Activated CD4-positive, alpha-beta T cell treated with anti-CD3 and anti-CD28 coated beads, Interleukin-2, amount 10 ng/mL, durations not matched to agents 24 days and 14 days (primary cell): ENCODE measurements at regions of chr6 and their contacts with region 1.

Region 1: DNA sequence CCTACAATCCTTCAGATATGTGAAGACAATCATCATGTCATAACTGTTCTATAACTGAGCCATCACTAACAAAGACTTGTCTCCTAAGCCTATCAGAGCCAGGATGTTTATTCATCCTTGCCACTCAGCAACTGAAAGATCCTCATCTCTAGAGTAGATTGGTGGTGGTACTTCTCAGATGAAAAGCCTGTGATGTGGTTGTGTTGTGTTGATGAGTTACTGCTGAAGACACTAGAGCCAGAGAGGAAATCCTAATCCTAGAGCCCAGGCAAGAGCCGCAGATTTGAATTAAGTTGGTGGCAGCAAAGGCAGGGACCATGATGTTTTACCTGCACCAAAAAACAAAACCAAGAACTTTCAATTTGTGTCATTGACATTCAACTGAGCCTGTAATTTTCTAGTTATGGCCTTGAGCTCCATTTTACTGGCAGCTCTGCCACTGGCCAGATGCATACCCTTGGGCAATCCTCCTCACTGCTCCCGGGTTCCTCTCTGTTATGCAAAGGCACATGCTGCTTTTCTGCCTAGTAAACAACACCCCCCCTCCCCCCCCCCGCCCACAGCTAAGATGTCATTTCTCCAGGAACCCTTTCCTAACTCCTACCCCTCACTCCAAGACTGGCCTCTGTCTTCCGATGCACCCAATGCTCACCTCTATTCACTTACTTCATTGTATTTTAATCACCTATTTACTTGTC is 50.2 kb upstream of the REV3L start:
- DNase-seq: peak; percentile 79
- H3K4me3 Mint-ChIP-seq: peak overlapping the region; percentile 2
- H3K27ac Mint-ChIP-seq: peak overlapping the region; percentile 46
- H3K4me1 Mint-ChIP-seq: peaks cover 26% of the 10 kb centered on the region
- H3K27me3 Mint-ChIP-seq: no peaks in the 10 kb centered on the region

Region 2: GRCh38 chr6:110938171-110938570 is 595.1 kb before region 1 on chr6:
- intact Hi-C with region 1: no loop called
- DNase-seq: no peak
- H3K4me3 Mint-ChIP-seq: no peak overlapping the region
- H3K27ac Mint-ChIP-seq: no peak overlapping the region
- H3K4me1 Mint-ChIP-seq: peaks cover 4% of the 10 kb centered on the region
- H3K27me3 Mint-ChIP-seq: no peaks in the 10 kb centered on the region

Region 3: DNA sequence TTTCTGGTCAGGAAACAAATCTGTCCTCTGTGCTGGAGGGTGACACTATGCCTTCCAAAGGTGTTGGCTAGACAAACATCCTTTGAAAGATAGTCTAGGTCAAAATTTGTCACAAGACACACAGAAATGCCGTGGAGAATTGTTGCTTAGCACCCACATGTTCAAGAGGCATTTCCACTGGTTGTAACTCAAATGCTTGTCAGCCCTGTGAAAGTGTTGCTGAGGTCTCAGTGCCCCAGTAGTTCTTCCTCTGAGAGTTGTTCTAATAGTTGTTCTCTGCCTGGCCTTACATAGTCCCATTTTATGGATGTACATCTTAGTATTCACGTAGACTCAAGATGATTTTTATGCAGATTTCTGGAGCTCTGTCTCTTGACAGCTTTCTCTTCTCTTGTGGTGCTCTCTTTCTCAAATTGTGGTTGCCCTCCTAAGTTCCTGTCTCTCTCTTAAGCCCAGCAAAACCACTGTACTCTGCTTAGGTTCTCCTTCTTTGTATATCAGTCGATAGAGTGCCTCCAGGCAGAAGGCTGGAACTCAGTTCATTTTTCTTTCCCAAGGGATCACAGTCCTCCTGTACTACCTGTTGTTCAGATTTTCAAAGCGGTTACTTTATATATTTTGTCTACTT is 10.7 kb before region 1 on chr6:
- intact Hi-C with region 1: loop called (anchors 1 kb)
- DNase-seq: peak; percentile 75
- H3K4me3 Mint-ChIP-seq: peak overlapping the region; percentile 42
- H3K27ac Mint-ChIP-seq: peak overlapping the region; percentile 1
- H3K4me1 Mint-ChIP-seq: peaks cover 34% of the 10 kb centered on the region
- H3K27me3 Mint-ChIP-seq: no peaks in the 10 kb centered on the region

Region 4: GRCh38 chr6:111565326-111566221 is 32.3 kb after region 1 on chr6:
- intact Hi-C with region 1: loop called (anchors 2 kb)
- DNase-seq: peak; percentile 72
- H3K4me3 Mint-ChIP-seq: no peak overlapping the region
- H3K27ac Mint-ChIP-seq: peak overlapping the region; percentile 77
- H3K4me1 Mint-ChIP-seq: peaks cover 52% of the 10 kb centered on the region
- H3K27me3 Mint-ChIP-seq: no peaks in the 10 kb centered on the region

Region 5: DNA sequence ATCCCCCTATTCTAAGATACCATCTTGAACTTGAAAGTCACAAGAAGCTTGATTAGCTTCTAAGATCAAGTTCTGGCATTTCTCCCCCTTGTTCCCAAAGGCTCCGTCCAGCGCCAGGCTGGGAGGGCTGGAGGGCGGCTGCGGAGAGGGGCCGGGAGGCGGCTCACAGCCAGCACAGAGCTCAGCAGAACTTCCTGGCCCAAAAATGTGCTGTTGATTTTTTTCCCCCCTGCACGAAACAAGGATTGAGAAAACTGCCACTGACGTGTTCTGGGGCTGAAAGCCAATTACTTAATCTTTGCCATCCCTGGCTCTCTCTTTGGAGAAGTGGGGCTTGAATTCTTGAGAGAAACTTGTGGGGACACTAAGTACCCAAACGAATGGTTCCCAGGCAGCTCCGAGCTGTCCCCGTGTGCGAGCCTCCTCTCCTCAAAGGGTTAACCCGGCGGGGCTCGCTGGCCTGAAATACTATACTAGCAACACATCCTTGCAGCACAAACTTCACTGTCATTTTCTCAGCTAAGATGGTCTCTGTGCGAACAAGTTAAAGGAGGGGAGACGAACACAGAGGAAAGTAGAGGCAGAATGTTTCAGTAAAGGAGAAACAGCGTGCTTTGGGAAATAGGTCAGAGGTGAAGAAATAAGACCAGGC is 72.0 kb after region 1 on chr6:
- intact Hi-C with region 1: loop called (anchors 1 kb)
- DNase-seq: peak; percentile 78
- H3K4me3 Mint-ChIP-seq: peak overlapping the region; percentile 90
- H3K27ac Mint-ChIP-seq: peak overlapping the region; percentile 99
- H3K4me1 Mint-ChIP-seq: peaks cover 30% of the 10 kb centered on the region
- H3K27me3 Mint-ChIP-seq: no peaks in the 10 kb centered on the region